ENCODE measurements at regions of chr9 and their contacts with region 1.

Region 1: DNA sequence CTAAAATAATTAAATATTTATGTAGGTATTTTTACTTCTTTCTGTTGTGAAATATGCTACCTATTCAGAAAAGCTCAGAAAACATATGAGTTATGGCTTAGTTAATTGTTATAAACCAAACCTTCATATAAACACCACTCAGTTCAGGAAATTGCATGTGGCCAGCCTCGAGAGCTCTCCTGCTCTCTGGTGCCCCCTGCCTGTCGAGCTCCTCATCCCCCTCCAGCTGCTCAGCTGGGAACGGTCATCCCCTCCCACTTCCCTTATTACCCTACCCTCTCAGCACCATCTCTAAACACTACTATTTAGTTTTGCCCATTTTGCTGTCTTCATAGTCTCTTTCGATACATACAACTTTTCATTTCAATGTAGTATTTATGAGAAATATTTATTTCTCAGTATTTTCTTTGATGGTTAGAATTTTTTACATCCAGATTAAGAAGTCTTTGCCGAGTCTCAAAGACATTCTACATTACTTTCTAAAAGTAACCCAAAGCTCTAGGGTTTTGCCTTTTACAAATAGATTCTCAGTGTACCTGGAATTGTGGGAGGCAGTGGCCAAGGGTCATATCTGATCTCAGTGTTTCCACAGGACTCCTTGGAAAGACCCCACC is 51.2 kb upstream of the SEMA4D start:
- DNase-seq: peak; percentile 76 to 86 (median 82)
- H3K4me3 ChIP-seq: no peak overlapping the region
- H3K4me3 Mint-ChIP-seq: peak overlapping the region in 1 of 7 donors; percentile 11
- H3K27ac ChIP-seq: no peak overlapping the region
- H3K27ac Mint-ChIP-seq: peak overlapping the region in 6 of 8 donors; percentile 5 to 72 (median 52)
- H3K4me1 ChIP-seq: peaks cover 15% of the 10 kb centered on the region
- H3K4me1 Mint-ChIP-seq: peaks cover 7 to 14% (median 13%) of the 10 kb centered on the region in 3 donors
- H3K27me3 ChIP-seq: no peaks in the 10 kb centered on the region
- H3K27me3 Mint-ChIP-seq: no peaks in the 10 kb centered on the region

Region 2: DNA sequence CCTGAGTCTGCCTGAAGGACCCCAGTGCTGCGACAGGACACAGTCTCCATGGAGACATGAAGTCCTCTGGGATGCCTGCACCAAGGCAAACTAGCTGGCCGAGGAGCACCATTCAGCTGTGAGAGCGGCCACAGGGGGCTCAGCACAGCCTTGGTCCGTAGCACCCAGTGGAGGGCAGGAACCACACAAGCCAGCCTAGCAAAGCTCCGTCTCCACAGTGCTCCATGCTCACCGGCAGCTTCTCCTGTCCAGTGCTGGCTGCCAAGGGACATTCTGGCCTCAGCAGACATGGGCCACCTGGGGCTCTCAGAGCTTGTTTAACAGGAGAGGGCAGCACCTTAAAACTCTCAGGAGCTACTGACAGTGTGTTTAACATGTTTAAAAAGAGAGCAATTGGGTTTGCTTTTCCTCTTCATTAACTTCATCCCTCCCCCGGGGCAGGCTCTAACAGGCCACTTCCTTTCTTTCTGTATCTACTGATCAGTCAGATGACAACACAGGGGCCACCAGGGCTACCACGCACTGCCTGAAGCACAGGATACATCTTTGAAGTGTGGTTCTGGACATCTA is 173.9 kb before region 1 on chr9:
- CTCF ChIA-PET with region 1: interaction called, 15 read pairs
- POLR2A ChIA-PET with region 1: interaction called, 4 read pairs
- DNase-seq: no peak
- H3K4me3 ChIP-seq: no peak overlapping the region
- H3K4me3 Mint-ChIP-seq: no peak overlapping the region
- H3K27ac ChIP-seq: peak overlapping the region; percentile 9
- H3K27ac Mint-ChIP-seq: peak overlapping the region; percentile 41 to 95 (median 83)
- H3K4me1 ChIP-seq: peaks cover 26% of the 10 kb centered on the region
- H3K4me1 Mint-ChIP-seq: peaks cover 24 to 61% (median 58%) of the 10 kb centered on the region in 3 donors
- H3K27me3 ChIP-seq: no peaks in the 10 kb centered on the region
- H3K27me3 Mint-ChIP-seq: peaks cover 0 to 6% of the 10 kb centered on the region in 2 donors

Region 3: GRCh38 chr9:89410641-89411350 is 138.3 kb before region 1 on chr9:
- CTCF ChIA-PET with region 1: interaction called, 25 read pairs
- POLR2A ChIA-PET with region 1: no interaction called
- DNase-seq: no peak
- H3K4me3 ChIP-seq: no peak overlapping the region
- H3K4me3 Mint-ChIP-seq: peak overlapping the region; percentile 40 to 83 (median 62)
- H3K27ac ChIP-seq: no peak overlapping the region
- H3K27ac Mint-ChIP-seq: peak overlapping the region; percentile 56 to 96 (median 88)
- H3K4me1 ChIP-seq: peaks cover 90% of the 10 kb centered on the region
- H3K4me1 Mint-ChIP-seq: peaks cover 89 to 98% (median 98%) of the 10 kb centered on the region in 3 donors
- H3K27me3 ChIP-seq: no peaks in the 10 kb centered on the region
- H3K27me3 Mint-ChIP-seq: peaks cover 0 to 2% of the 10 kb centered on the region in 2 donors

Region 4: GRCh38 chr9:89442981-89443814 is 105.9 kb before region 1 on chr9:
- CTCF ChIA-PET with region 1: interaction called, 37 read pairs
- POLR2A ChIA-PET with region 1: interaction called, 3 read pairs
- DNase-seq: no peak
- H3K4me3 ChIP-seq: no peak overlapping the region
- H3K4me3 Mint-ChIP-seq: peak overlapping the region in 2 of 7 donors; percentile 19 to 63
- H3K27ac ChIP-seq: peak overlapping the region; percentile 44
- H3K27ac Mint-ChIP-seq: peak overlapping the region; percentile 71 to 98 (median 94)
- H3K4me1 ChIP-seq: peaks cover 98% of the 10 kb centered on the region
- H3K4me1 Mint-ChIP-seq: peaks cover 85 to 95% (median 93%) of the 10 kb centered on the region in 3 donors
- H3K27me3 ChIP-seq: no peaks in the 10 kb centered on the region
- H3K27me3 Mint-ChIP-seq: peaks cover 0 to 2% of the 10 kb centered on the region in 2 donors

Region 5: DNA sequence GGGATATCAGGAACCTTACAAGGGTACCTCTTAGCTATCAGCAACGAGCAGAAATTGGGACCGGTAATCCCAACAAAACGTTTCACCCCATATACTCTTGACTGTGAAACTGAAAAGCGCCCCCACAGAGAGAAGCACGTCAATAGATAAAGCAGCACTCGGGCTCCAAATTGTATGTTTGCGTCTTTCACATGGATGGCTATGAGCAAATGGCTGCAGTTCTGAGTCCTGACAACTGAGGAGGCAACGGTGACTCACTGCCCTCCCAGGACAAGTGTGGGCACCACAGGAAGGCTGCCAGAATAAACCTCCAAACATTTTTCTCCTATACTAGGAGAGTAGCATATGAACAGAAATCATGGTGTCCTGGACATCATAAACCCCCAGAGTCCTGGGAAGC is 87.9 kb before region 1 on chr9:
- CTCF ChIA-PET with region 1: interaction called, 17 read pairs
- POLR2A ChIA-PET with region 1: interaction called, 4 read pairs
- DNase-seq: peak in 1 of 5 donors; percentile 50
- H3K4me3 ChIP-seq: no peak overlapping the region
- H3K4me3 Mint-ChIP-seq: peak overlapping the region in 5 of 7 donors; percentile 20 to 62 (median 35)
- H3K27ac ChIP-seq: no peak overlapping the region
- H3K27ac Mint-ChIP-seq: peak overlapping the region; percentile 56 to 95 (median 88)
- H3K4me1 ChIP-seq: peaks cover 99% of the 10 kb centered on the region
- H3K4me1 Mint-ChIP-seq: peaks cover 92 to 98% (median 97%) of the 10 kb centered on the region in 3 donors
- H3K27me3 ChIP-seq: no peaks in the 10 kb centered on the region
- H3K27me3 Mint-ChIP-seq: peaks cover 0 to 2% of the 10 kb centered on the region in 2 donors

Region 6: DNA sequence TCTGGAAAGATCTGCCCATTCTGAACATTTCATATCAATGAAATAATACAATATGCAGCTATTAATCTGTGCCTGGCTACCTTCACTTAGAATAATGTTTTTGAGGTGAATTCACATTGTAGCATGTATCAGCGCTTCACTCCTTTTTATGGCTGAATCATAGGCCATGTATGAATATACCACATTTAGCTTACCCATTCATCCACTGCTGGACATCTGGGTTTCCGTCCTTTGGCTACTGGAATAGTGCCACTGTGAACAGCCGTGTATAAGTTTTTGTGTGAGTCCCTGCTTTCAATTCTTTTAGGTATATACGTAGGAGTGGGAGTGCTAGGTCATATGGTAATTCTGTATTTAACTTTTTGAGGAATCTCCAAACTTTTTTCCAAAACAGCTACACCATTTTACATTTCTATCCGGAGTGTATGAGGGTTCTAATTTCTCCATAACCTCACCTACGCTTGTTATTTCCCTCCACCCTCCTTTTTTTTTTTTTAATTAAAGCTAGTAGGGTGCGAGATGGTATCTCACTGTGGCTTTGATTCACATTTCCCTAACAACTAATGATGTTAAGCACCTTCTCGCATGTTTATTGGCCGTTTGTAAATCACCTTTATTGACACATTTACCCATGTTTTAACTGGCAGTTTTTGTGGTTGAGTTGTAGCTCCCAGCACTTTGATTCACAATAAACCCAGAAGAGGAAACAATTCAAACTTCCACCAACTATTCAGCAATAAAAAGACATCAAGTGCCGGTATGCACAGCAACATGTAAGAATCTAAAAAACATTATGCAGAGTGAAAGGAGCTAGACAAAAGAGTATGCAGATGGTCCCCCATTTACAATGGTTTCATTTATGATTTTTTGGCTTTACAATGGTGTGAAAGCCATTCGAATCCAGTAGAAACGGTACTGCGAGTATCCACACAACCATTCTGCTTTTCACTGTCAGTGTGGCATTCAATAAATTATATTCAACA is 59.3 kb before region 1 on chr9:
- CTCF ChIA-PET with region 1: interaction called, 29 read pairs
- POLR2A ChIA-PET with region 1: interaction called, 5 read pairs
- DNase-seq: peak in 2 of 5 donors; percentile 79 to 81
- H3K4me3 ChIP-seq: peak overlapping the region; percentile 9
- H3K4me3 Mint-ChIP-seq: peak overlapping the region; percentile 33 to 94 (median 66)
- H3K27ac ChIP-seq: no peak overlapping the region
- H3K27ac Mint-ChIP-seq: peak overlapping the region; percentile 16 to 96 (median 88)
- H3K4me1 ChIP-seq: peaks cover 93% of the 10 kb centered on the region
- H3K4me1 Mint-ChIP-seq: peaks cover 92 to 98% (median 98%) of the 10 kb centered on the region in 3 donors
- H3K27me3 ChIP-seq: no peaks in the 10 kb centered on the region
- H3K27me3 Mint-ChIP-seq: no peaks in the 10 kb centered on the region

Region 7: GRCh38 chr9:89529243-89530035 is 19.7 kb before region 1 on chr9:
- CTCF ChIA-PET with region 1: interaction called, 29 read pairs
- POLR2A ChIA-PET with region 1: interaction called, 3 read pairs
- DNase-seq: peak in 1 of 5 donors; percentile 66
- H3K4me3 ChIP-seq: no peak overlapping the region
- H3K4me3 Mint-ChIP-seq: peak overlapping the region in 6 of 7 donors; percentile 29 to 65 (median 52)
- H3K27ac ChIP-seq: no peak overlapping the region
- H3K27ac Mint-ChIP-seq: peak overlapping the region; percentile 15 to 81 (median 76)
- H3K4me1 ChIP-seq: peaks cover 98% of the 10 kb centered on the region
- H3K4me1 Mint-ChIP-seq: peaks cover 93 to 100% (median 100%) of the 10 kb centered on the region in 3 donors
- H3K27me3 ChIP-seq: no peaks in the 10 kb centered on the region
- H3K27me3 Mint-ChIP-seq: no peaks in the 10 kb centered on the region

Region 8: DNA sequence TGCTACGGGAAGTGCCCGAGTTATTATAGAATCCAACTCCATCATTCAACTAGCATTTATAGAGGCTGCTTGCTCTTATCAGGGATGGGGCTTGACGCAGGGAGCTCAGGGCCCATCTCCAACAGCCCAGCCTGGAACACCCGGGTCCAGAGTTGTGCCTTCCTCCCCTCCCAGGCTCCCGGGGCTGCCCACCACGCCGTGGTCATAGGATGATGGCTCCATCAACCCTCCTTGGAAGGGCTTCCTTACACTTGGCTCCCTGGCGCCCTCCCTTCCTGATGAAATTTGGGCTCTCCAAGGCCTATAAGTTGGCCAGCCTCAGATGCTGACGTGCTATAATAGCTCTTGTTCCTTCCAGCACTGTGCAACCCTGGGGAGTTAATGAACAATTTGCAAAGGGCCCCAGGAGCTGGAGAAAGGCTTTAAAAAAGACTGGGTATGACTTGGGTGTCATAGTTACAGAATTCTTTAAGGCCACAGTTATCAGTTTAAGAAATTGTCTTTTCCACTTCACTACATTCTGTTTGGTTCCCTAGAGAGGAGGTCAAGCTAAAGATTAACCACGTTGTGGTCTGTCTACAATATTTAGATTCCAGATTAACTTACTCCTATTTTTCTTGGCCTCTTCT is 13.2 kb after region 1 on chr9:
- CTCF ChIA-PET with region 1: no interaction called
- POLR2A ChIA-PET with region 1: no interaction called
- DNase-seq: no peak
- H3K4me3 ChIP-seq: no peak overlapping the region
- H3K4me3 Mint-ChIP-seq: no peak overlapping the region
- H3K27ac ChIP-seq: no peak overlapping the region
- H3K27ac Mint-ChIP-seq: no peak overlapping the region
- H3K4me1 ChIP-seq: peaks cover 8% of the 10 kb centered on the region
- H3K4me1 Mint-ChIP-seq: peaks cover 3 to 11% (median 6%) of the 10 kb centered on the region in 3 donors
- H3K27me3 ChIP-seq: no peaks in the 10 kb centered on the region
- H3K27me3 Mint-ChIP-seq: peaks cover 5 to 17% of the 10 kb centered on the region in 2 donors